ENCODE measurements at regions of chr14 and their contacts with region 1.

Region 1: DNA sequence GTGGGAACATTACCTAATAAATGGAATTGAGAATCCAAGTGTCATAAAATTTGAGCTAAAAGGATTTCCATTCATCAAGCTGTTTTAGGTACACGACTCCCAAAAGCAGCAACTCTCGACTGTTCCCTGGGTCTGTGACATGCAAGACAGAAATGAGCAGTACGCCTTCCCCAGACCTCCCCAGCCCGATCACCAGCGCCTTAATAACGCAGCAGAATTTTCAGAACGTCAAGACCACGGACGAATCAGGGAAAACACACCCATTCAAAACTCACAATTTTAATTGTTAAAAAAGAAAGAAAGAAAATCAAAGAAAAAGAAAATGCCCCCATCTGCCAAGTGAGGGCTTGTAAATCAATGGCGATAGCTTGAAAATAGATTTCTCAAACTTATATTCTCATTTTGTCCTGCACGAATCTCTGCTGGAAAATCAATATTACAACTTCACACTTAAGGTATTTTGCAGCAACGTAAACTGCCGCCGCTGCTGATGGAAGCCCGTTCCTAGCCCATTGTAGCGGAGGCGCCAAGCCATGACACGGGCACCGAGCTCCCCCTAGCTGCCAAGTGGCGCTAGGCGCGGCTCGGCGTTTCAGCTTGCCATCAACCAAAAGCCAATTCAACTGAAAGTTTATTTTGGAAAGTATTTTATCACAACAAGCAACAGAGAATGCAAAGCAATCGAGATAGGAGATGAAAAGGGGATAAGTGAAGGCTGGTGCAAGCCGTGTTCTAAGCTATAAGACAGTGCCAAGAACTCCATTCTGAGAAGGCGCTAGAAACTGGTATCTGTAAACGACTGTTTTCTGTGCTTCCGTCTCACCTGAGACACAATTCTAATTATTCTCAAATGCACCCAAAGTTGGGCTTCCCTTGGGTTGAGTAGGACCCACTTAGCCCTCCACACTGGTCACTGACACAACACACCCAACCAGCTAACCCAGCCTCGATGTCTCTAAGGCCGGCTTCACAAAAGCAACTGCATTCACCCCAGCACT is 5.5 kb downstream of the BCL11B start:
- DNase-seq: peak; percentile 93
- H3K4me3 Mint-ChIP-seq: peak overlapping the region; percentile 96
- H3K27ac Mint-ChIP-seq: peak overlapping the region; percentile 95
- H3K4me1 Mint-ChIP-seq: peaks cover 44% of the 10 kb centered on the region
- H3K27me3 Mint-ChIP-seq: no peaks in the 10 kb centered on the region

Region 2: GRCh38 chr14:98198385-98198784 is 1068.1 kb before region 1 on chr14:
- CTCF ChIA-PET with region 1: no interaction called
- intact Hi-C with region 1: loop called (anchors 2 kb)
- DNase-seq: peak; percentile 60
- H3K4me3 Mint-ChIP-seq: peak overlapping the region; percentile 9
- H3K27ac Mint-ChIP-seq: peak overlapping the region; percentile 73
- H3K4me1 Mint-ChIP-seq: peaks cover 85% of the 10 kb centered on the region
- H3K27me3 Mint-ChIP-seq: no peaks in the 10 kb centered on the region

Region 3: GRCh38 chr14:98548071-98548686 is 718.3 kb before region 1 on chr14:
- CTCF ChIA-PET with region 1: no interaction called
- intact Hi-C with region 1: loop called (anchors 10 kb)
- DNase-seq: peak; percentile 69
- H3K4me3 Mint-ChIP-seq: peak overlapping the region; percentile 22
- H3K27ac Mint-ChIP-seq: peak overlapping the region; percentile 91
- H3K4me1 Mint-ChIP-seq: peaks cover 22% of the 10 kb centered on the region
- H3K27me3 Mint-ChIP-seq: no peaks in the 10 kb centered on the region

Region 4: GRCh38 chr14:99230208-99231151 is 36.0 kb before region 1 on chr14:
- CTCF ChIA-PET with region 1: interaction called, 16 read pairs
- intact Hi-C with region 1: loop called (anchors 1 kb)
- DNase-seq: peak; percentile 93
- H3K4me3 Mint-ChIP-seq: peak overlapping the region; percentile 73
- H3K27ac Mint-ChIP-seq: peak overlapping the region; percentile 97
- H3K4me1 Mint-ChIP-seq: peaks cover 95% of the 10 kb centered on the region
- H3K27me3 Mint-ChIP-seq: no peaks in the 10 kb centered on the region

Region 5: GRCh38 chr14:99252940-99253868 is 13.3 kb before region 1 on chr14:
- CTCF ChIA-PET with region 1: interaction called, 10 read pairs
- intact Hi-C with region 1: loop called (anchors 1 kb)
- DNase-seq: peak; percentile 84
- H3K4me3 Mint-ChIP-seq: peak overlapping the region; percentile 68
- H3K27ac Mint-ChIP-seq: peak overlapping the region; percentile 95
- H3K4me1 Mint-ChIP-seq: peaks cover 95% of the 10 kb centered on the region
- H3K27me3 Mint-ChIP-seq: no peaks in the 10 kb centered on the region

Measured in activated naive CD4-positive, alpha-beta T cell treated with anti-CD3 and anti-CD28 coated beads for 36 hours (primary cell).